Caco-2 (cell line): ENCODE measurements at regions of chr7 and their contacts with region 1.

Region 1: GRCh38 chr7:149028346-149029109 is at the start of gene PDIA4:
- DNase-seq: peak; percentile 100
- H3K4me3 ChIP-seq: peak within 1 kb of the TSS; percentile 69
- H3K4me3 Mint-ChIP-seq: peak within 1 kb of the TSS; percentile 78
- H3K27ac Mint-ChIP-seq: peak within 1 kb of the TSS; percentile 68
- H3K4me1 ChIP-seq: no peaks in the 10 kb centered on the region
- H3K4me1 Mint-ChIP-seq: peaks cover 13% of the 10 kb centered on the region
- H3K27me3 ChIP-seq: no peaks in the 10 kb centered on the region
- H3K27me3 Mint-ChIP-seq: no peaks in the 10 kb centered on the region
- CTCF ChIP-seq: peak in 1 of 2 experiments; percentile 16
- total RNA-seq, gene PDIA4: 192 and 197 TPM in 2 replicates

Region 2: GRCh38 chr7:148987010-148987750 is 41.3 kb before region 1 on chr7:
- CTCF ChIA-PET with region 1: no interaction called
- POLR2A ChIA-PET with region 1: no interaction called
- intact Hi-C with region 1: loop called (anchors 1 kb)
- DNase-seq: peak; percentile 90 to 95
- H3K4me3 ChIP-seq: peak overlapping the region; percentile 50
- H3K4me3 Mint-ChIP-seq: peak overlapping the region; percentile 84
- H3K27ac Mint-ChIP-seq: peak overlapping the region; percentile 85
- H3K4me1 ChIP-seq: peaks cover 13% of the 10 kb centered on the region
- H3K4me1 Mint-ChIP-seq: peaks cover 44% of the 10 kb centered on the region
- H3K27me3 ChIP-seq: no peaks in the 10 kb centered on the region
- H3K27me3 Mint-ChIP-seq: no peaks in the 10 kb centered on the region
- CTCF ChIP-seq: no peak

Region 3: DNA sequence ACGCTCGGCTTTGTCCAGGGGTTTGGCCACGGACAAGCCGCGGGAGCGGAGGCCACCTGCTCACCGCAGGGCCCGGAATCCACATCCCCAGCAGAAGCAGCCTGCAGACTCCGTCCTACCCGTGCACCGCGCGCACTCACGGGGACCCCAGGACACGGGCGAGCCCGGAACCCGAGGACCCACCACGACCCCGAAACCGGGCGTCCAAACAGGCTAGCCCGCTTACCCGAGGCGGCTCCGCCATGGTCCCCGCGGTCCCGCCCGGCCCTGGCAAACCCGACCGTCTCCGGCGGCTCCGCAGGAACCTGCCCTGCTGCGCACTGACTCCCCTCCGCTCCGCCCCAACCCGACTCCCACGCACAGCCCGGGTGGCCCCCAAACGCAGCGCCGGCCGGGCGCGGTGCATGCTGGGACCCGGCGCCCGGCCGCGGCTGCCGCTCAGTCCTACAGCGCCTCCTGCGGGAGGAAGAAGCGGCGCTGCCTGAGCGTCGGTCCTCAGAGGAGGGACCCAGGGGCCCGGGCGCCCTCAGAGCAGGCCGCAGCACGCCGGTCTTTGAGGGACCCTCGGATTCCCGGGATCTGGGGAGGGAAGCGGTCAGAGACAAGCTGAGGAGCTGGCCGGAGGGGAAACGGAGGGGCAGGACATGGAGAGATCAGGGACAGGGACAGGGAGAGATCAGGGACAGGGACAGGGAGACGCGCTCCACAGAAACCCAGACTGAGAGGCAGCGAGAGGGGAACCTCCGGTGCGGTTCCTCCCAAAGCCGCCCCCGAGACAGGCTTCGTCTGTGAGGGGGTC is 62.1 kb after region 1 on chr7 and contains the start of gene ZNF786:
- CTCF ChIA-PET with region 1: no interaction called
- POLR2A ChIA-PET with region 1: no interaction called
- intact Hi-C with region 1: loop called (anchors 1 kb)
- DNase-seq: peak; percentile 88 to 92
- H3K4me3 ChIP-seq: peak within 1 kb of the TSS; percentile 100
- H3K4me3 Mint-ChIP-seq: peak within 1 kb of the TSS; percentile 81
- H3K27ac Mint-ChIP-seq: peak within 1 kb of the TSS; percentile 91
- H3K4me1 ChIP-seq: peaks cover 8% of the 10 kb centered on the region; the same call in 1 of the 2 replicates
- H3K4me1 Mint-ChIP-seq: peaks cover 5% of the 10 kb centered on the region
- H3K27me3 ChIP-seq: no peaks in the 10 kb centered on the region
- H3K27me3 Mint-ChIP-seq: no peaks in the 10 kb centered on the region
- CTCF ChIP-seq: peak; percentile 79 to 86
- total RNA-seq, gene ZNF786: 9.4 and 9.5 TPM in 2 replicates

Region 4: GRCh38 chr7:149147072-149147751 is 118.7 kb after region 1 on chr7 and contains the start of gene ZNF398:
- CTCF ChIA-PET with region 1: no interaction called
- POLR2A ChIA-PET with region 1: no interaction called
- intact Hi-C with region 1: loop called (anchors 5 kb)
- DNase-seq: peak; percentile 73 to 85
- H3K4me3 ChIP-seq: peak within 1 kb of the TSS; percentile 97
- H3K4me3 Mint-ChIP-seq: peak within 1 kb of the TSS; percentile 97
- H3K27ac Mint-ChIP-seq: peak within 1 kb of the TSS; percentile 79
- H3K4me1 ChIP-seq: peaks cover 10% of the 10 kb centered on the region
- H3K4me1 Mint-ChIP-seq: peaks cover 28% of the 10 kb centered on the region
- H3K27me3 ChIP-seq: no peaks in the 10 kb centered on the region
- H3K27me3 Mint-ChIP-seq: no peaks in the 10 kb centered on the region
- CTCF ChIP-seq: peak; percentile 47 to 72
- total RNA-seq, gene ZNF398: 13.0 and 13.4 TPM in 2 replicates

Region 5: DNA sequence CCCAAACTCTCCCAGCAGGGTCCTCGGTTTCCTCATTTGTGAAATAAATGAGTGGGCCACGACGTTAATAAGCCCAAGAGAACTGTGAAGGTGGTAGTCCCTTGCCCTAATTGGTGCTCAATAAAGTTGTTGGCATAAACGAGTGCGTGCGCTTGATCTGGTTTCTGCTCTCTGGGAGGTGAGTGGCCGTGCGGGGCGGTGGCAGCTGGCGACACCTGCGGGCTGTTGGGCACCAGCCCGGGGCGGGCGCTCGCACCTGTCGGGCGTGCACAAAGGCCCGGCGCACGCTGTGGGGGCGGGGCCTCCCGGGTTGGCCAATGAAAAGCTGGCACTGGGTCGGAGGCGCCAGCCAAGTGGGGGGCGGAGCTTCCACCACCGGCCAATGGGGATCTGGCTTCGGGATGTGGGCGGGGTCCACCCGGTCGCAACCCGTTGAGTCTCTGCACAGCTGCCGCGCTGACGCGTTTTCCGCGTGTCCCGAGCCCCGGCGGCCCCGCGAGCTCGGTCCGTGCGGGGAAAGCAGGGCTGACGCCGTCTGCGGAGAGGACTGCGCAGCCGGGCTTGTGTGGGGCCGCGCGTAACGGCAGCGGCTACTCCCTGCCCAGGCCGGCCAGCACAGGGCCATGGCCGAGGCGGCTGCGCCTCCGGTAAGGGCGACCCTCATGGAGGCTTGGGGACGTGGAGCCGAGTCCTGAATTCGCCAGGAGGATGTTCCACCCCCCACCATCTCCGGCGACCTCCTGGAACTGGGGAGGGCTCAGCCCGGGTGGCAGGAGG is 256.5 kb after region 1 on chr7:
- CTCF ChIA-PET with region 1: no interaction called
- POLR2A ChIA-PET with region 1: no interaction called
- intact Hi-C with region 1: loop called (anchors 1 kb)
- DNase-seq: peak; percentile 98 to 100
- H3K4me3 ChIP-seq: peak overlapping the region; percentile 76
- H3K4me3 Mint-ChIP-seq: peak overlapping the region; percentile 81
- H3K27ac Mint-ChIP-seq: peak overlapping the region; percentile 69
- H3K4me1 ChIP-seq: no peaks in the 10 kb centered on the region
- H3K4me1 Mint-ChIP-seq: peaks cover 8% of the 10 kb centered on the region
- H3K27me3 ChIP-seq: no peaks in the 10 kb centered on the region
- H3K27me3 Mint-ChIP-seq: no peaks in the 10 kb centered on the region
- CTCF ChIP-seq: peak in 1 of 2 experiments; percentile 42